Activated CD4-positive, alpha-beta memory T cell treated with anti-CD3 and anti-CD28 coated beads for 36 hours (primary cell): ENCODE measurements at regions of chr1 and their contacts with region 1.

Region 1: GRCh38 chr1:78617615-78618026 is 2.6 kb upstream of the IFI44L start:
- DNase-seq: peak; percentile 44
- H3K4me3 Mint-ChIP-seq: no peak overlapping the region
- H3K27ac Mint-ChIP-seq: no peak overlapping the region
- H3K4me1 Mint-ChIP-seq: peaks cover 34% of the 10 kb centered on the region
- H3K27me3 Mint-ChIP-seq: no peaks in the 10 kb centered on the region

Region 2: DNA sequence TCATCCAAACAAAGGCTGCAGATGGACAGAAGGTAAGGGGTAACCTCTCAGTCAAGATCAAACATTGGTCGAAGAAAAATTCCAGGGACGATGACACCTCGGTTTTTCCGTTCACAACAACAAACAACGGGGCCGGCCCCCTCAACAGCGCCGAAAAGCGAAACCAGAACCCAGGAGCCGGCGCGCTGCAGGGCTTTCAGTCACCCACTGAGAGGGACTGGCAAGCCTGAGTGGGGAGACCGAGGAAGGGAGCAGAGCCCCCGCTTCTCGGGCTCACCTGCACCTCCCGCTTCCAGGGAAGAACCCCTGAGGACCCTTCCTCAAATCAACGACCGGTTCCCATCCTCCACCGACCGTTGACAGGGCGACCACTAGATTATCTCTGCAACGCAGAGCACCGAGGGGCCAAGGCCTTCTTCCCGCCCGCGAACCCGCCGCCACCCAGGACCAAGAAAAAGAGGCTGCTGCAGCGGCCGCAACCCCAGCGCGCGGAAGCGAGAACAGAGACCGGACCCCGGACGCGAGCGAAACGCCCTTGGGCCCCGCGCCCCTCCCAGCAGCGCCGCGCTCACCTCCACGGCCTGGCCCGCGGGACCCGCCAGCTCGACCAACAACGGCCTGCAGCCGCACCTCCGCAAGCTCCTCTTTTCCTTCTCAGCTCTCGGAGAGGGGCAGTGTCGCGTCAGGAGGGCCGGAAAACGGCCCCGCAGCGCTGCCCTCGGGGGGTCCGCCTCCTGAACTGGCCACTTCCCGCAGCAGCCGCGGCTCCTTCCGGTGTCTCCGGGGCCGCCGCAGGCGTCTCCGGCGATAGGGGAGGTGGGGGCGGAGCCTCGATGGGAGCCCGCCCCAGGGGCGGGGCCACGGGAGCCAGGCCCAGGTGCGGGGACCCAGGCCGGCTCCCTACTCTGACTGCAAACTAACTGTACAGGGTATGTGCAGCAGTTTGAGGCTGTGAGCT is 858.3 kb before region 1 on chr1 and contains the start of gene USP33:
- CTCF ChIA-PET with region 1: no interaction called
- POLR2A ChIA-PET with region 1: no interaction called
- intact Hi-C with region 1: loop called (anchors 5 kb)
- DNase-seq: peak; percentile 95
- H3K4me3 Mint-ChIP-seq: peak within 1 kb of the TSS; percentile 96
- H3K27ac Mint-ChIP-seq: peak within 1 kb of the TSS; percentile 94
- H3K4me1 Mint-ChIP-seq: peaks cover 47% of the 10 kb centered on the region
- H3K27me3 Mint-ChIP-seq: no peaks in the 10 kb centered on the region
- total RNA-seq, gene USP33: 37.7 to 41.0 TPM

Region 3: DNA sequence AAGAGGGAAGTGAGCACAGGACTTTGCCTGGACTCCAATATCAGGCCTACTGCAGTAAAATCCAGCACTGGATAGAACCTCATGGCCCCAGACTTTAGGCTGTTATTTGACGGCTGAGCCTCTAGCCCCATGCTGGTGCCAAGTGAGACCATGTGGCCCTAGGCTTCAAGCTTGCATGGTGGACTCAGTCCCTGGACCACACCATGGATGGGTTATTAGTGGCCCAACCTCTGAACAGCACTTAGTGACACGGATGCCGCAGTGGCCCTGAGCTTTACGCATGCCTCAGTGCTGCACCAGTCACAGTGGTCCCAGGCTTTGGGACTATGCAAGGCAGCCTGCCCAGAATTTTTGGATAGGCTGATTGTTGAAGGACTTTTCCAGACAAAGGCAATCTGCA is 15.6 kb after region 1 on chr1:
- CTCF ChIA-PET with region 1: interaction called, 10 read pairs
- POLR2A ChIA-PET with region 1: no interaction called
- intact Hi-C with region 1: no loop called
- DNase-seq: no peak
- H3K4me3 Mint-ChIP-seq: no peak overlapping the region
- H3K27ac Mint-ChIP-seq: no peak overlapping the region
- H3K4me1 Mint-ChIP-seq: peaks cover 4% of the 10 kb centered on the region
- H3K27me3 Mint-ChIP-seq: no peaks in the 10 kb centered on the region

Region 4: DNA sequence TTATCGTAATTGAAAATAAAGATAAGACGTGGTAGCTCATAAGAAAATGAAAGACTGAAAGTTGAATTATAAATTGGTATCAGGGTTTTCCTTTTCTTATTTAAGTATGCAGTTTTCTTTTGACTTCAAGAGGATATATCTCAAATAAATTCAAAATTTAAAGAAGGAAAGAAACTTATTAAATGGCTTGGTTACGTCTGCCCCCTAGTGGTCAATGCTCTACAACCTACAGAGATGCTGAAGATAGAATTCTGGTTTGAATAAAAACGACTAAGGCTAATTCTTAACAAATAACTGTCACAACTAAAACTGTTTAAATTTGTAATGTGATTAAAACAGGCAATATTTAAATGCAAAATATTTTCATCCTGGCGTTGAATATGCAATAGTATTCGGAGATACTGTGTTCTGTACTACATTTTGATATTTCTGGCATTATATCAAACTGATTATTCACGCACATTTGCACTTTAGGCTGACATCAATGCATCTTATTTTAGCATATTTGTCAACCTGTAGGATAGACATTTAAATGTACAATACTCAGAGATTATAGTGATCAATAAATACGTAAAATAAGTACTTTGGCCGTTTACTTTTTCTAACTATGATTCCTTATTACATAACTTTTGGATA is 58.8 kb after region 1 on chr1:
- CTCF ChIA-PET with region 1: interaction called, 70 read pairs
- POLR2A ChIA-PET with region 1: interaction called, 3 read pairs
- intact Hi-C with region 1: loop called (anchors 1 kb)
- DNase-seq: peak; percentile 44
- H3K4me3 Mint-ChIP-seq: no peak overlapping the region
- H3K27ac Mint-ChIP-seq: no peak overlapping the region
- H3K4me1 Mint-ChIP-seq: peaks cover 5% of the 10 kb centered on the region
- H3K27me3 Mint-ChIP-seq: peaks cover 1% of the 10 kb centered on the region

Region 5: DNA sequence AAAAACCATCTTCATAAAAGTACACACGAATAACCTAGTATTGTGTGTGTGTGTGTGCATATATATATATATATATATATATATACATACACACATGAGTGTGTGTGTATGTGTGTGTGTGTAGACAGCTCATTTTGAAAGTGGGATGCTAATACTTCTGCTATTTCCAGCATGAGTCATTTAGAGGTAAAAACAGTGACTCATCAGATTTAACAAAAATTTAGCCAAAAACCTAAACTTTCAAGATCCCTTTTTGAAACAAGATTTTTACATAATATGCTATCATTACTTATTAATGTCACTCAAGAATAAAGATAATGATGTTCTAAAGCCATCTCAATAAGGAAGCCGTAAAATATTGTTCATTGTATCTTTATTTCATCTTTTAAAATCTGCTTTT is 424.5 kb after region 1 on chr1:
- CTCF ChIA-PET with region 1: no interaction called
- POLR2A ChIA-PET with region 1: no interaction called
- intact Hi-C with region 1: loop called (anchors 10 kb)
- DNase-seq: no peak
- H3K4me3 Mint-ChIP-seq: no peak overlapping the region
- H3K27ac Mint-ChIP-seq: no peak overlapping the region
- H3K4me1 Mint-ChIP-seq: peaks cover 3% of the 10 kb centered on the region
- H3K27me3 Mint-ChIP-seq: no peaks in the 10 kb centered on the region